ENCODE measurements at regions of chr10 and their contacts with region 1.

Region 1: DNA sequence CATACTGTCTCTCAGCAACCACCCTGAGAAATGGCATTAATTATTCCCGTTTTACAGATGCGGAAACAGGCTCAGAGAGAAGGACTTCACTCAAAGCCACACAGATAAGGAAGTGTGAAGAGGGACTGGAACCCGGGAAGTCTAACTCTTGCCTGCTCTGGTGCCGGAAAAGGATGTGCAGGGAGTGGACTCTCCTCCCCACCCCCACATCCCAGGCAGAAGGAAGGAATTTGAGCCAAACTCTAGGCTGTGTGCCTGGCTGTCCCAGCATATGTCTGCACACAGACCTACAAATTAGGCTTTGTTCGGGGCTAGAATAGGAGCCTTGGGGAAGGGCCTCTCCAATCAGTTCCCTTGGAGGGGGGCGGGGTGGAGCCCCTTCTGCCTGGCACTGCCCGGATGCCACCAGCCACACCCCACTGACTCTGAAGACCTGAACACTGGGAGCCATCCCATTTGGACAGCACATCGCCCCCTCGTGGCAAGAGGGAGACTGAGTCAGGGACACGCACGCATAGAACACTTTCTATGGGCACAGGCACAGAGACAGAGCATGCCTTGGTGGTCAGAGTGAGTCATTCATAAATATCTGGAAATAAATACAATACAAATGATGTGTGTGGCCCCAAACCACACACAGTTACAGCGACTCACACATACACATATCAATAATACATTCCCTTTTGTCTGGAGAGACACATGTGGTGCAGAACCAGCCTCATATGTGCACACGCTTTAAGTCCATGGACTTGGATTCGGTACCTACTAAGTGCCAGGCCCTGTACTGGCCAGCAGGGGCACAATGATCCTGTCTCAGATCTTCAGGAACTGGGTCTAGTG is 13.1 kb downstream of the LZTS2 start:
- DNase-seq: peak; percentile 84
- ATAC-seq: peak; percentile 68
- H3K4me3 ChIP-seq: no peak overlapping the region; the same call in 1 of the 2 replicates
- H3K27ac ChIP-seq: peak overlapping the region; percentile 29
- H3K4me1 ChIP-seq: peaks cover 29% of the 10 kb centered on the region
- H3K27me3 ChIP-seq: no peaks in the 10 kb centered on the region
- CTCF ChIP-seq: peak; percentile 75

Region 2: GRCh38 chr10:100993986-100994708 is 18.6 kb before region 1 on chr10:
- CTCF ChIA-PET with region 1: interaction called, 16 read pairs
- POLR2A ChIA-PET with region 1: no interaction called
- intact Hi-C with region 1: loop called (anchors 1 kb)
- DNase-seq: peak; percentile 59
- ATAC-seq: 0 out of 2 replicates have a peak, but pooled peaks have one; percentile 6
- H3K4me3 ChIP-seq: no peak overlapping the region
- H3K27ac ChIP-seq: no peak overlapping the region
- H3K4me1 ChIP-seq: peaks cover 36% of the 10 kb centered on the region
- H3K27me3 ChIP-seq: no peaks in the 10 kb centered on the region
- CTCF ChIP-seq: peak; percentile 68

Region 3: GRCh38 chr10:100998991-100999741 is 13.6 kb before region 1 on chr10:
- CTCF ChIA-PET with region 1: interaction called, 16 read pairs
- POLR2A ChIA-PET with region 1: no interaction called
- intact Hi-C with region 1: loop called (anchors 1 kb)
- DNase-seq: peak; percentile 64
- ATAC-seq: peak; percentile 38
- H3K4me3 ChIP-seq: peak overlapping the region; percentile 88
- H3K27ac ChIP-seq: peak overlapping the region; percentile 76
- H3K4me1 ChIP-seq: peaks cover 36% of the 10 kb centered on the region
- H3K27me3 ChIP-seq: no peaks in the 10 kb centered on the region
- CTCF ChIP-seq: peak; percentile 66

Region 4: DNA sequence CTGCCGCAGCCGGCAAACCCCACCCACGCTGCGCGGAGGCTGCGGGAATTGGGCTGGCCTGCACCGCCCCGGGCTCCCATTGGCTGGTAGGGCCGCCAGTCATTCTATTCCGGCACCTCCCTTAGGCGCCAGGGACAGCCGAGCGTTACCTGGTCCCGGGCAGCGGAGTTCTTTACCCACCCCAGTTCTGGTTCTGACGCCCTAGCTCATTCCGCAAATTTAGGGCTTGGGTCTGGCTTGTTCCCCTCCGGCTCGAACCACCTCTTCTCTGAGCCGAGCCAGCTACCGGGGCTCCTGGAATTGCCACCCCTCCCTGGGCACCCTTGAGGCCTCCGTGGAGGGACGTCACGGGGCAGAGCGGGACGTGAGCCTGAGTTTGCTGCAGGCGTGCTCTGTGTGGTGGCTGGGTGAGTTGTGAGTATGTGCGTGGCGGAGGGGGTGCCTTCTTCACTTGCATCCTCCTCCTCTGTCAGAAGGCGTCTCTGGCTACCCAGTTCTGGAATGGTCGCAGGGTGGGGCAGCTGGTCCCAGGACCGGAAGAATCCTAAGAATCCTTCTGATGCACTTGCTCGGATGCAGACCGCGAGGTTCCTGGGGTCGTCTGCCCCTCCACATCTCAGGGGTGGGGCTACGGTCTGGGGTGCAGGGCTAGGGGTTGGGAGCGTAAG is 18.5 kb after region 1 on chr10 and contains the starts of genes PDZD7 and SFXN3:
- CTCF ChIA-PET with region 1: no interaction called
- POLR2A ChIA-PET with region 1: interaction called, 13 read pairs
- intact Hi-C with region 1: no loop called
- DNase-seq: peak; percentile 91
- ATAC-seq: peak; percentile 80
- H3K4me3 ChIP-seq: peak within 1 kb of the TSS; percentile 83
- H3K27ac ChIP-seq: peak within 1 kb of the TSS; percentile 95
- H3K4me1 ChIP-seq: peaks cover 8% of the 10 kb centered on the region
- H3K27me3 ChIP-seq: no peaks in the 10 kb centered on the region
- CTCF ChIP-seq: no peak
- total RNA-seq, gene PDZD7: 2.5 and 2.8 TPM in 2 replicates
- total RNA-seq, gene SFXN3: 46.7 and 63.7 TPM in 2 replicates

Region 5: GRCh38 chr10:101060036-101060950 is 47.5 kb after region 1 on chr10:
- CTCF ChIA-PET with region 1: no interaction called
- POLR2A ChIA-PET with region 1: interaction called, 11 read pairs
- intact Hi-C with region 1: no loop called
- DNase-seq: peak; percentile 93
- ATAC-seq: peak; percentile 48
- H3K4me3 ChIP-seq: peak overlapping the region; percentile 87
- H3K27ac ChIP-seq: peak overlapping the region; percentile 85
- H3K4me1 ChIP-seq: peaks cover 35% of the 10 kb centered on the region
- H3K27me3 ChIP-seq: no peaks in the 10 kb centered on the region
- CTCF ChIP-seq: peak; percentile 90

Region 6: DNA sequence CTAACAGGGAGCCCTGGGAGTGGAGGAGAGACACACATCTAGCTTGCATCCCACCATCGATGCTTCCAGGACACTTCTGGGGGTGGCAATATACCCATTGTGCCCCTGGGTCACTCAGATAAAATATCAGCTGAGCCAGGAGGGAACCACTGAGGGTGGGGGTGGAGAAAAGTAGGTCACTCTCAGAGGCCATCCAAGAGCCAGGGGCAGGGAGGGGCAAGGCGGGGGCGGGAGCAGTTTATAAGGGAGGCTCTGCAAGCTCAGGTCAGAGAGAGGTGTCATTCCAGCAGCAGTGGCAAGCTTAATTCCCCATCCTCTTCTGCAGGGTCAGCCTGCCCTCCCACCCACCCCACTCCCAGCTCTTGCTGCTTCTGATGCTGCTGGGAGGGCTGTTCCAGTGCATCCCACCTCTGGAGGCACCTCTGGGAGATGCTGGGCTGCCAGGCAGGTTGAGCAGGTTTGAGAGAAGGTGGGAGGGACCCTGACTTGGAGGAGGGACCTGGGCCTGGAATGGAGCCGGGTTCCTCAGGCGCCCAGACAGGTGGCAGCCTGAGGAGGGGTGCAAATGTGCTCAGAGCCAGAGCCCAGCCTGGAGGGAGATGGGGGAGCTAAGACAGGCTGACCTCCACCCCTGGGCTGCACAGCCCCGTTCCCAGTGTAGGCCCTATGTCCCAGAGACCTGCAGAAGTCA is 98.3 kb after region 1 on chr10:
- CTCF ChIA-PET with region 1: no interaction called
- POLR2A ChIA-PET with region 1: no interaction called
- intact Hi-C with region 1: no loop called
- DNase-seq: peak; percentile 15
- ATAC-seq: no peak
- H3K4me3 ChIP-seq: no peak overlapping the region
- H3K27ac ChIP-seq: no peak overlapping the region
- H3K4me1 ChIP-seq: no peaks in the 10 kb centered on the region
- H3K27me3 ChIP-seq: no peaks in the 10 kb centered on the region
- CTCF ChIP-seq: no peak